ENCODE measurements at regions of chr1 and their contacts with region 1.

Region 1: DNA sequence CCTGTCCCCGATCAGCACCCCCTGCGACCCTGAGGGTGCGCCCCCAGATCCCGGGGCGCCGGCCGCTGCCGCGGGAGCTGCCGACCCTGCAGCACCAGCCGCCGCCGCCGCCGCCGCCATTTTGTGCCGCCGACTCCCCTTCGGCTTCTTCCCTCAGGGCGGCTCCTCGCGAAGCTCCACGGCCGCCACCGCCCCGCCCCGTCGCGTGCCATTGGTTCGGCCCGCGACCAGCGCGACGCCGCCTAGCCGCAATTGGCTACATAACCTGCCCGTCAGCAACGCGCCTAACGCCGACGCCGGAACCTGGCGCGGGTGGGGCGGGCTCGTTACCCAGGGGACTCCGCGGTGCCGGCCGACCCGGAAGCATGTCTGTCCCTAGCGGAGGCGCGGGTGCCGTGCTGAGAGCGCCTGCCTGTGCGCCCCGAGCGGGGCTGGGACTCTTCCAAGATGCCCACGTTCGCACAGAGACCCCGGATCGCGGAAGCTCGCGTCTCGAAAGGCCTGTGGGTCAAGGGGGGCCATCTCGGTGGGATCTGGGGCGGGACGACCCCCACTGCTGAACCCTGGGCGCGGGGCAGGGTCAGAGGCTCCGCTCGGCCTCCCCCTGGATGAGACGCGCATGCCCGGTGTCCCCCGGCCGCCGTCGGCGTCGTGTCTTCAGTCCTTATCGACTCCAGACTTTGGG is at the start of gene CCNL2:
- DNase-seq: peak; percentile 96 to 100 (median 98)
- ATAC-seq: peak; percentile 96
- H3K4me3 ChIP-seq: peak within 1 kb of the TSS; percentile 100
- H3K27ac ChIP-seq: peak within 1 kb of the TSS; percentile 98
- H3K4me1 ChIP-seq: peaks cover 19 to 46% of the 10 kb centered on the region in 2 experiments
- H3K27me3 ChIP-seq: no peaks in the 10 kb centered on the region
- CTCF ChIP-seq: peak; percentile 67 to 76 (median 71)
- EP300 ChIP-seq: peak; percentile 34; the same call in 1 of the 2 replicates
- POLR2A ChIP-seq: peak; percentile 92
- RAD21 ChIP-seq: no peak; a peak in 2 of 4 replicates
- polyA plus RNA-seq, gene CCNL2: 2.8 to 5.6 TPM

Region 2: DNA sequence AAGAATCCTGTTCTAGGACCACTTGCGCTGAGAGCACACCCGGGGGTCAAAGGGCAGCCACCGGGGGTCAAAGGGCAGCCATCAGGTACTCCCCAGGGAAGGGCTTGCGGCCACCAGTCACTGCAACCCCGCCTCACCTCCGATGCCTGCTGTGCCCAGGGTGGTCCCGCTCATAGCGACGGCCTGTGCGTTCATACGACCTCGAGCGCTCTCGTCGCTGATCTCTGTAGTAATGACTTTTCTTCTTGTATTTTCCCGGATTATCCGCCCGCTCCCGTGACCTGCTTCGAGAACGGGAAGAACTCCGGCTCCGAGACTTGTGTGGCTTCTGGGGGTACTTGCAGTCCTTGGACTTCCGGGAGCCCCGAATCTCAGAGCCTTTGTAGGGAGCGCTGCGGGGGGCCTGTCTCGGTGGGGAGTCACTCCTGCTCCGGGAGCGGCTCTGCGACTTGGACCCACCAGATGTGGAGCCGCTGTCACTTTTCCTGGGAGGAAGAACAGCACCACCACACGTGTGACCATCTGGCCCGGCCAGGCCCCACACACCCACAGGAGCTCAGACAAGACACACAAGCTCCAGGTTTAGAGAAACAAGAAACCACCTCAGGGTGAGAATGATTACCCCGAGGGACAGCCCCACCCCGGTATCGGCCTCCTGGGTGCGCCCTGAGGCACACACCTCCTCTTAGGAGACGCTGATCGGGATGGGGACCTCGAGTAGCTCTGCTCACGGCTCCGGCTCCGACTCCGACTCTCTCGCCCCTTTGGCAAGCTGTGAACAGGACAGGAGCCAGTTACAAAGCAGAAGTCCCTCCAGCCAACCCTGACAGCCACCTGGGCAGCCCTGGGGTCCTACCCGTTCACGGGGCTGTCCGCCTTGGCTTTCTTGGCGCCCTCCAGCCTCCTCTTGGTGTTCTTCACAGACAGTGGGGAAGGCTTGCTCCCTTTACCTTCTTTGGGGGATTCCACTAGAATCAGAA is 11.9 kb before region 1 on chr1:
- CTCF ChIA-PET with region 1: no interaction called
- POLR2A ChIA-PET with region 1: interaction called, 58 read pairs
- in situ Hi-C with region 1: no loop called
- intact Hi-C with region 1: no loop called
- DNase-seq: peak in 1 of 4 experiments; percentile 42
- ATAC-seq: no peak
- H3K4me3 ChIP-seq: no peak overlapping the region
- H3K27ac ChIP-seq: no peak overlapping the region
- H3K4me1 ChIP-seq: peaks cover 6 to 12% of the 10 kb centered on the region in 2 experiments; a peak in 4 of 5 replicates
- H3K27me3 ChIP-seq: no peaks in the 10 kb centered on the region
- CTCF ChIP-seq: no peak
- EP300 ChIP-seq: no peak
- POLR2A ChIP-seq: no peak
- RAD21 ChIP-seq: no peak

Region 3: DNA sequence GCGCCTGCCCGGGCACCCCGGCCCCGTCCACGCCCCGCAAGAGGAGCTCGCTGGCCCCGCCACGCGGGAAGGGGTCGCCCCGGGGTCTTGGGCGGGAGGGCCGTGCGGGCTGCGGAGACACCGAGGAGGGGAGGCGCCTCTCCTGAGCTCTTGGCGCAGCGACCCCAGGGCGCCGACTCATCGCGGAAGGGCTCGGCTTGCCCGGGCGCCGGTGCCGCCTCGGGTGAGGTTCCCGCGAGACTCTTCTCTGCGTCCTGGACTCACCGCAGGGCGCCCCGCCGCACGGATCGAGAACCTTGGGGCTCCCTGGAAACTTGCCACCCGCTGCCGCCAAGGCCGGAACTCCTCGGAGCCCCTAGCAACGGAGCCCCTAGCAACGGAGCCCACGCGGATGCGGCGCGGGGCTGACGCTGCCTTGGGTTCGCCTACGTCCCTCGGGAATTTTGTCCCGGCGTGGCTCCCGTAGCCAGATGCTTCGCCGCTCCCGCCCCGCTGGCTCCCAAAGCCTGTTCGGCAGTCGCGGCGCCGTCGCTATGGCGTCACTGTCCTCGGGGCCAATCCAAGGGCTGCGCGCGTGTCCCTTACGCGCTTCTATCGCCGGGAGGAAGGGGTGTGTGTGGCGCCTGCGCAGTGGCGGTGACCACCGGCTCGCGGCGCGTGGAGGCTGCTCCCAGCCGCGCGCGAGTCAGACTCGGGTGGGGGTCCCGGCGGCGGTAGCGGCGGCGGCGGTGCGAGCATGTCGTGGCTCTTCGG is 112.4 kb after region 1 on chr1 and contains the start of gene ATAD3A:
- CTCF ChIA-PET with region 1: no interaction called
- POLR2A ChIA-PET with region 1: interaction called, 5 read pairs
- in situ Hi-C with region 1: no loop called
- intact Hi-C with region 1: loop called (anchors 10 kb)
- DNase-seq: peak; percentile 93 to 100 (median 96)
- ATAC-seq: peak; percentile 96
- H3K4me3 ChIP-seq: peak within 1 kb of the TSS; percentile 93
- H3K27ac ChIP-seq: peak within 1 kb of the TSS; percentile 91
- H3K4me1 ChIP-seq: peaks cover 0 to 19% of the 10 kb centered on the region in 2 experiments; a peak in 2 of 5 replicates
- H3K27me3 ChIP-seq: no peaks in the 10 kb centered on the region
- CTCF ChIP-seq: peak in 1 of 3 experiments; percentile 7; a peak in 1 of 6 replicates
- EP300 ChIP-seq: no peak
- POLR2A ChIP-seq: peak; percentile 92
- RAD21 ChIP-seq: no peak
- polyA plus RNA-seq, gene ATAD3A: 0.10 to 1.0 TPM

Measured in K562 (cell line).